ENCODE measurements at regions of chr3 and their contacts with region 1.

Region 1: GRCh38 chr3:197541756-197542539 is 13.8 kb downstream of the BDH1 start:
- DNase-seq: peak; percentile 73 to 94 (median 91)
- ATAC-seq: peak; percentile 83
- H3K4me3 ChIP-seq: no peak overlapping the region
- H3K27ac ChIP-seq: no peak overlapping the region
- H3K4me1 ChIP-seq: peaks cover 4 to 6% of the 10 kb centered on the region in 2 experiments; a peak in 3 of 5 replicates
- H3K27me3 ChIP-seq: peaks cover 45 to 82% of the 10 kb centered on the region in 2 experiments
- CTCF ChIP-seq: no peak
- EP300 ChIP-seq: no peak
- POLR2A ChIP-seq: no peak
- RAD21 ChIP-seq: no peak

Region 2: GRCh38 chr3:197372047-197372666 is 169.8 kb before region 1 on chr3:
- CTCF ChIA-PET with region 1: no interaction called
- POLR2A ChIA-PET with region 1: no interaction called
- in situ Hi-C with region 1: no loop called
- intact Hi-C with region 1: no loop called
- DNase-seq: no peak
- ATAC-seq: no peak
- H3K4me3 ChIP-seq: no peak overlapping the region
- H3K27ac ChIP-seq: no peak overlapping the region
- H3K4me1 ChIP-seq: no peaks in the 10 kb centered on the region
- H3K27me3 ChIP-seq: peaks cover 62 to 70% of the 10 kb centered on the region in 2 experiments
- CTCF ChIP-seq: no peak
- EP300 ChIP-seq: no peak
- POLR2A ChIP-seq: no peak
- RAD21 ChIP-seq: no peak

Region 3: GRCh38 chr3:197586181-197586580 is 44.2 kb after region 1 on chr3:
- CTCF ChIA-PET with region 1: no interaction called
- POLR2A ChIA-PET with region 1: no interaction called
- in situ Hi-C with region 1: no loop called
- intact Hi-C with region 1: no loop called
- DNase-seq: no peak
- ATAC-seq: no peak
- H3K4me3 ChIP-seq: no peak overlapping the region
- H3K27ac ChIP-seq: no peak overlapping the region
- H3K4me1 ChIP-seq: peaks cover 0 to 4% of the 10 kb centered on the region in 2 experiments; a peak in 1 of 5 replicates
- H3K27me3 ChIP-seq: no peaks in the 10 kb centered on the region
- CTCF ChIP-seq: no peak
- EP300 ChIP-seq: no peak
- POLR2A ChIP-seq: no peak
- RAD21 ChIP-seq: no peak

Region 4: GRCh38 chr3:197667978-197668377 is 126.0 kb after region 1 on chr3:
- CTCF ChIA-PET with region 1: no interaction called
- POLR2A ChIA-PET with region 1: no interaction called
- in situ Hi-C with region 1: no loop called
- intact Hi-C with region 1: loop called (anchors 10 kb)
- DNase-seq: peak in 1 of 4 experiments; percentile 9
- ATAC-seq: no peak
- H3K4me3 ChIP-seq: no peak overlapping the region
- H3K27ac ChIP-seq: no peak overlapping the region; the same call in 2 of the 3 replicates
- H3K4me1 ChIP-seq: peaks cover 10 to 12% of the 10 kb centered on the region in 2 experiments; a peak in 4 of 5 replicates
- H3K27me3 ChIP-seq: no peaks in the 10 kb centered on the region
- CTCF ChIP-seq: no peak
- EP300 ChIP-seq: no peak
- POLR2A ChIP-seq: no peak
- RAD21 ChIP-seq: no peak

Measured in K562 (cell line).